Adrenal gland (tissue), 19 donors: ENCODE measurements at regions of chr22 and their contacts with region 1.

Region 1: DNA sequence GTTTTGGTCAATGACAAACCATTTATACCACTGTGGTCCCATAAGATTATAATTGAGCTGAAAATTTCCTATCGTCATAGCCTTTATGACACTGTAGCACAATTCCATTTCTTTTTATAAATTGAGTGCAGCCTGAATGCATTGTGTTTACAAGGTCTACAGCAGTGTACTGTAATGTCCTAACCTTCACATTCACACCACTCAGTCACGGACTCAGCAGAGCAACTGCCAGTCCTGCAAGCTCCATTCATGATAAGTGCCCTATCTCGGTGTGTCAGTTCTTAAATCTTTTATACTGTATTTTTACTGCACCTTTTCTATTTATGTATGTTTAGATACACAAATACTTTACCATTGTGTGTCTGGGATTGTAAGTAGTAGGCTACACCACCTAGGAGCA is 55.2 kb upstream of the SLC25A18 start:
- DNase-seq: no peak
- H3K4me3 ChIP-seq: no peak overlapping the region
- H3K27ac ChIP-seq: no peak overlapping the region
- H3K4me1 ChIP-seq: no peaks in the 10 kb centered on the region
- H3K27me3 ChIP-seq: no peaks in the 10 kb centered on the region
- CTCF ChIP-seq: no peak
- POLR2A ChIP-seq: no peak

Region 2: GRCh38 chr22:17176715-17177114 is 331.4 kb before region 1 on chr22:
- intact Hi-C with region 1: loop called in 1 of 2 experiments (anchors 5 kb)
- DNase-seq: no peak
- H3K4me3 ChIP-seq: no peak overlapping the region
- H3K27ac ChIP-seq: no peak overlapping the region
- H3K4me1 ChIP-seq: peaks cover 7% of the 10 kb centered on the region in 2 donors
- H3K27me3 ChIP-seq: no peaks in the 10 kb centered on the region
- CTCF ChIP-seq: no peak
- POLR2A ChIP-seq: no peak

Region 3: GRCh38 chr22:17411213-17411612 is 96.9 kb before region 1 on chr22:
- intact Hi-C with region 1: no loop called
- DNase-seq: no peak
- H3K4me3 ChIP-seq: no peak overlapping the region
- H3K27ac ChIP-seq: no peak overlapping the region
- H3K4me1 ChIP-seq: no peaks in the 10 kb centered on the region
- H3K27me3 ChIP-seq: no peaks in the 10 kb centered on the region
- CTCF ChIP-seq: no peak
- POLR2A ChIP-seq: no peak

Region 4: GRCh38 chr22:17436382-17436980 is 71.6 kb before region 1 on chr22:
- intact Hi-C with region 1: no loop called
- DNase-seq: no peak
- H3K4me3 ChIP-seq: no peak overlapping the region
- H3K27ac ChIP-seq: no peak overlapping the region
- H3K4me1 ChIP-seq: no peaks in the 10 kb centered on the region
- H3K27me3 ChIP-seq: no peaks in the 10 kb centered on the region
- CTCF ChIP-seq: no peak
- POLR2A ChIP-seq: no peak